Right ventricle myocardium inferior (tissue), 1 donor: ENCODE measurements at regions of chr4 and their contacts with region 1.

Region 1: GRCh38 chr4:139734875-139735380 is 69.3 kb downstream of the MGST2 start:
- DNase-seq: peak; percentile 94
- ATAC-seq: peak; percentile 95

Region 2: DNA sequence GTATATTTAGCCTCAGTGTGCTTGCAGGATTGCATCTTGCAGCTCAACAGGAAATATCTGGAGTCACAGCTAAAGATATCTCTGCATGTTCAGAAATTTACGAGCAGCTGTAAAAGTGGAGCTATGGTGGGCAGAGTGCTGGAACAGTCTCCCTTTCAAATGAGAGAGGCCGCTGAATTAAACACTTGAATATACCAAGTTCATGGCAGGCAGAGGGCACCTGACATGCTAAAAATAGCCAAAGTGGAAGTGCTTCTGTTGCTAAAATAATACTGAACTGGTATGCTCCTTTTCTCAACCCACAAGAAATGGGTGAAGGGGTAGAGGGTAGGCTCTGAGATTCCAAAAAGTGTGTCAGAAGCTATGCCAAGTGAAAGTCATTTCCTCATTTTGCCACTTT is 28.7 kb after region 1 on chr4:
- intact Hi-C with region 1: loop called (anchors 2 kb)
- DNase-seq: no peak
- ATAC-seq: peak; percentile 66

Region 3: GRCh38 chr4:139861471-139861870 is 126.5 kb after region 1 on chr4:
- intact Hi-C with region 1: loop called (anchors 5 kb)
- DNase-seq: no peak
- ATAC-seq: no peak

Region 4: DNA sequence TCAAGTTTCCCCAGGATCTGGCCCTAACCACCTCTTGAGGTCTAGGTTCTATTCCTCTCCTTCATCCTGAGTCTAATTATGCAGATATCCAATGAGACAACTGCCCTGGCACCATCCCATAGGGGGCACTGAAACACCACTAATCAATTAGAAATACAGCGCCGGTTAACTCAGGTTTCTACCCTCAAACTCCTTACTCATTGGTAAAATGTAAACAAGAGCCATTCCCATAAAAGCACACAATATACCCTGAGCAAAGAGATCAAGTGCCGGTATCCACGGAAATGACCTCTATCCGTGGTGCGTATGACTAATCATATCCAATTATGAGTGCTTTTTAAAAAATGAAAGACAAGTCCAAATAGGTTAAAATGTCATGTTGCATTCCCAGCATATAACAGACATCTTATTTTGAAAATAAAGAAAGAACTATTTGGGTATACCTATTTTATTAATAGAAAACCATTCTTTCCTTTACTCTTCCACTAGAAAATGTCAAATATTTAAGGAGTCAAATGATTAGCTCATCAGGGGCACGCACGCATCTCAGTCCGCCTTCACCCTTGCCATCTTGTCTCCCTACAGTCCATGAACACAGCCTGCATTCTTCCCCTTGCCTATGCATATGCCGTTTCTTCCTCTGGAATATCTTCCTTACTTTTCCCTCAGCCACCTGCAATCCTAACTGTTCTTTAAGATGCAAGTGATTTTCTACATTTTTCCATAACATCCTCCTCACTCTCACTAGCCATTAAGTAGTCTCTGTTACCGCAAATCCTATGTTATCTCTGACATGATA is 278.0 kb after region 1 on chr4:
- intact Hi-C with region 1: loop called (anchors 2 kb)
- DNase-seq: no peak
- ATAC-seq: peak; percentile 87

Region 5: DNA sequence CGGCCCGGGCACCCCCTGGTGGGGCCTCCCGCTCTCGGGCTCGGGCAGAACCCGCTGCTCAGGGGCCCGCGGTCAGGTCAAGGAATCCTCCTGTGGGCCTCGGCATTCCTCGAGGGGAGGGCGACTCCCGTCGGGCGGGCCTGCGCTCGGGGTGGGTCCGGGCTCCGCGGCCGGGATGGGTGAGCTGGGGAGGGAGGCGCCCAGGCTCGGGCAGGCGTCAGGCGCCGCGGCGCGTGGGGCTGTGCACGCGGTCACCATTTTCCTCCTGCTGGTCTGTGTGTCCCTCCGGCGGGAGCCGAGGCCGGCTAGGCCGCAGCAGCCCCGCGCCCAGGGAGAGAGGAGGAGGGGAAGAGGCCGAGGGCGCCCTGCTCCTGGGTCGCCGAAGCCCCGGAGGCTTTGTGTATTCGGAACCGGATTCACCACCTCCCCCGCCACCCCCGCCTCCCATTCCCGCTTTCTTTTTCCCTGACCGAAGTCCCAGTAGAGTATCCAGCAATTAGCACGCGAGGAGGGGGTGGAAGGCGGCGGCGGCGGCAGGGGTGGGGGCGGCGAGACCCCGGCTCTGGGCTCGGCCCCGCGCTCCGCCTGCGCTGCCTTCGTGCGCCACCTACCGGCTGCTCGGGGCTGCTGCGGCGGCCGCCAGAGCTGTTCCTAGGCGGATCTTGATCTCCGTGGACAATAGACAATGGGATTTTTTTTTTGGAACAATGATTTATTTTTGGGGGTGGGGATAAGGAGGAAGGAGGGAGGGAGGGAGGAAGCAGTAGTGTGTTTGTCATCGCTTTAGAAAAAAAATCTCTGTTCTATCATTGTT is 518.0 kb after region 1 on chr4:
- intact Hi-C with region 1: loop called (anchors 2 kb)
- DNase-seq: peak; percentile 88
- ATAC-seq: peak; percentile 86